ENCODE measurements at regions of chr13 and their contacts with region 1.

Region 1: GRCh38 chr13:60396783-60397703 is at the start of gene TDRD3:
- DNase-seq: peak; percentile 91
- H3K4me3 ChIP-seq: peak within 1 kb of the TSS; percentile 62
- H3K27ac ChIP-seq: peak within 1 kb of the TSS; percentile 93
- H3K4me1 ChIP-seq: peaks cover 27% of the 10 kb centered on the region
- H3K27me3 ChIP-seq: no peaks in the 10 kb centered on the region
- CTCF ChIP-seq: peak; percentile 84
- total RNA-seq, gene TDRD3: 30.7 and 34.1 TPM in 2 replicates

Region 2: DNA sequence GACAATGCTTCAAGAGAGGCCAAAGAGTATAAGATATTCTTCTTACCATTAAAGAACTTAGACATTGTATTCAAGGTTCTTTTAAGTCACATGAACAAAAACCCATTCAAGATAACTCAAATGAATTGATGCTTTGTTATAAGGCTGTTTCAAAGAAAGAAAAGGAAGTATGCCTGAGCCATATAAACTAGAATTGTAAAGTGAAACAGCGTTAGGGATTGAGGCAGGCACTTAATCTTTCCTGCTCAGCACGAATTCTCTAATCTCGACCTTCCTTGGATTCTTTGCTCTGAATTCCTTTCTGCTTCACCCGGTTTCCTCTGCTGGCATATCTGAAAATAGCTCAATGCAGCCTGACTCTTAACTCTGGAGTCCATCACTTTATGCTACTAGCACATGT is 828.7 kb before region 1 on chr13:
- CTCF ChIA-PET with region 1: no interaction called
- POLR2A ChIA-PET with region 1: interaction called, 18 read pairs
- intact Hi-C with region 1: no loop called
- DNase-seq: peak; percentile 67
- H3K4me3 ChIP-seq: no peak overlapping the region
- H3K27ac ChIP-seq: peak overlapping the region; percentile 45
- H3K4me1 ChIP-seq: peaks cover 29% of the 10 kb centered on the region
- H3K27me3 ChIP-seq: no peaks in the 10 kb centered on the region
- CTCF ChIP-seq: no peak

Region 3: GRCh38 chr13:60335531-60335930 is 61.5 kb before region 1 on chr13:
- CTCF ChIA-PET with region 1: no interaction called
- POLR2A ChIA-PET with region 1: interaction called, 3 read pairs
- intact Hi-C with region 1: loop called (anchors 1 kb)
- DNase-seq: peak; percentile 64
- H3K4me3 ChIP-seq: no peak overlapping the region
- H3K27ac ChIP-seq: peak overlapping the region; percentile 88
- H3K4me1 ChIP-seq: peaks cover 53% of the 10 kb centered on the region
- H3K27me3 ChIP-seq: no peaks in the 10 kb centered on the region
- CTCF ChIP-seq: peak; percentile 82

Region 4: GRCh38 chr13:60411983-60412382 is 14.9 kb after region 1 on chr13:
- CTCF ChIA-PET with region 1: interaction called, 5 read pairs
- POLR2A ChIA-PET with region 1: no interaction called
- intact Hi-C with region 1: loop called (anchors 1 kb)
- DNase-seq: no peak
- H3K4me3 ChIP-seq: no peak overlapping the region
- H3K27ac ChIP-seq: no peak overlapping the region
- H3K4me1 ChIP-seq: peaks cover 40% of the 10 kb centered on the region
- H3K27me3 ChIP-seq: no peaks in the 10 kb centered on the region
- CTCF ChIP-seq: no peak